Head of caudate nucleus (tissue), 42 donors: ENCODE measurements at regions of chr17 and their contacts with region 1.

Region 1: GRCh38 chr17:45098869-45099616 is 33.3 kb downstream of the PLCD3 start:
- DNase-seq: peak; percentile 57 to 94 (median 84)

Region 2: GRCh38 chr17:44911133-44912001 is 187.7 kb before region 1 on chr17:
- intact Hi-C with region 1: loop called (anchors 5 kb)
- DNase-seq: peak in 31 of 42 donors; percentile 29 to 76 (median 47)

Region 3: DNA sequence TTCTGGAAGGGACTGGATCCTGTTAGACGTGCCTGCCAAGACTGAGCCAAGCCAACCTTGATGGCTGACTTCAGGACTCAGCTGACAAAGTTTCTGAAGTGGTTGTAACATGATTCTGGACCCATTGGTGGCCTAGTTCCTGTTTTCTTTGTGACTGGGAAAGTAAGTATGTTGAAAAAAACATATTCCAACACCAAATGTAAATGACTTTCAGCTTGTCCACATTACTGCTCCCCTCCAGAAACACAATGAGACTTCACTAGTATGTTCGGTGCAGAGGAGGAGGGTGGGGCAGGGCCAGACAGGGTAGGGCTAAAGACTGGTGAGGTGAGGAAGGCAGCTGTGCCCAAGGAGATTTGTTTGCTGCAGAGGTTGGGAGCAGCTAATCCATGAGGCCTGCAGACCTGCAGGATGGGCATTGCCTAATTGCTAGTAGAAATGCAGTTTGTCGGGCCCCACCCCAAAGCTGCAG is 11.5 kb before region 1 on chr17:
- intact Hi-C with region 1: no loop called
- DNase-seq: no peak

Region 4: GRCh38 chr17:45197555-45198334 is 98.7 kb after region 1 on chr17:
- intact Hi-C with region 1: no loop called
- DNase-seq: peak; percentile 79 to 97 (median 92)

Region 5: GRCh38 chr17:45247429-45248131 is 148.5 kb after region 1 on chr17:
- intact Hi-C with region 1: no loop called
- DNase-seq: peak in 28 of 42 donors; percentile 18 to 74 (median 50)